ENCODE measurements at regions of chr14 and their contacts with region 1.

Region 1: DNA sequence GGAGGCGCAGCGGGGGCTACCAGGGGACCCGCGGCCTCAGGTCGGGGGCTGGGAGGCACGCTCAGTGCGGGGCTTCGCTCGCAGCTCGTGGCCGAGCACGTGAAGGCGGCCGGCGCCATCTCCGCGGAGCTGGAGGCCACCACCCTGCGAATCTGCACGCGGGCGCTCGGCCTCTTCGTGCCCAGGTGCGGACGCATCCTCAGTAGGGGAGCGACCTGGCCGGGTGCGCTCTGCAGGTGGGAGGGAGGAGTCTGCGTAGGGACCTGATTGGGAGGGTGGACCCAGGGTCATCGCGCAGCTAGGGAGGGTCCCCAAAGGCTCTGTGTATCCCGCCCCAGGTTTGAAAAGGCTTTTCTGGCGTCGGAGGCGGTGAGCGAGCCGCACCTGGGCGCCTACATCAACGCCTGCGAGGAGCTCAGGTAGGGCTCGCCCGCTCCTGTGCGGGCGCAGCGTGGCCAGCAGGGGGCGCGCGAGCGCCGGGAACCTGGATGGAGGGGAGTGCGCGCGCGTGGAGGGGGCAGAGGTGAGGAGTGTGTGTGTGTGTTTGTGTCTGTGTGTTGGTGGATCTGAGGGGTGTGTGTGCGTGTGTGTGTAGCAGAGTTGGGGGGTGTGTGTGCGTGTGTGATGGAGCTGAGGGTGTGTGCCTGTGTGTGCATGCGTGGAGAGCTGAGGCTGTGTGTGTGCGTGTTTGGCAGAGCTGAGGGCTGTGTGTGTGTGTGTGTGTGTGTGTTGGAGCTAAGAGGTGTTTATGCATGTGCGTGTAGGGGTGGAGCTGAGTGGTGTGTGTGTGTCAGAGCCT is 10.3 kb downstream of the EXOC3L4 start:
- DNase-seq: peak; percentile 59
- H3K4me3 Mint-ChIP-seq: no peak overlapping the region
- H3K27ac Mint-ChIP-seq: no peak overlapping the region
- H3K4me1 Mint-ChIP-seq: peaks cover 8% of the 10 kb centered on the region
- H3K27me3 Mint-ChIP-seq: peaks cover 13% of the 10 kb centered on the region
- CTCF ChIP-seq: peak; percentile 94

Region 2: GRCh38 chr14:103115883-103116572 is 11.2 kb after region 1 on chr14:
- CTCF ChIA-PET with region 1: interaction called, 17 read pairs
- POLR2A ChIA-PET with region 1: no interaction called
- intact Hi-C with region 1: no loop called
- DNase-seq: peak; percentile 68
- H3K4me3 Mint-ChIP-seq: no peak overlapping the region
- H3K27ac Mint-ChIP-seq: no peak overlapping the region
- H3K4me1 Mint-ChIP-seq: peaks cover 9% of the 10 kb centered on the region
- H3K27me3 Mint-ChIP-seq: no peaks in the 10 kb centered on the region
- CTCF ChIP-seq: no peak

Region 3: DNA sequence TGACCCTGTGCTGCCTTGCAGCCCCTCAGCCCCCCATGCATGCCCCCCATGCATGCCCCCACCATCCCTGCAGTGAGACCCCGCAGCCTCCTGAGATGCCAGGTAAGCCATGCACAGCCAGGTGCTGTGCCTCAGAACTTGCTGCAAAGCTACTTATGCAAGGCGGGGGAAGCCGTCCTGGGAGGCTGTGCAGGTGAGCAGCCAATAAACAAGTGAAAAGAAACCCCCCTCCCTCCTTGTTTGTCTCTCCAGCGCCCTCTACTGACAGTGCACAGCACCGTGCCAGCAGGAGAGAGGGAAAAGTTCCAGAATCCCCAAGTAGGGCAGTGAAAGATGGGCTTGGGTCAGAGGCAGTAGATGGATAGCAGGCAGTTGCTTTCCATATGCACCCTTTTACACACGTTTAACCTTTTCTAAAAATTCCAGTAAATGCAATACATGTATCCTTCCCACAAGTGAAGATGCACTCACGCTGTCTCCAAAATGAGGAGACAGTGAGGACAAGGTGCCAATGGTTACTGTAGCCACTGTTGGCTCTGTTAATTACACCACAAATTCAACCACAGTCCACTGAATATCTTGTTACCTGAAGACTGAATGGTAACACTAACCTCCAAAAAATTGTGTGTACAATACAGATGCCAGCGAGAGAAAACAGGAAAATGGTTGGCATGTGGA is 36.4 kb after region 1 on chr14:
- CTCF ChIA-PET with region 1: interaction called, 12 read pairs
- POLR2A ChIA-PET with region 1: no interaction called
- intact Hi-C with region 1: loop called (anchors 5 kb)
- DNase-seq: peak; percentile 77
- H3K4me3 Mint-ChIP-seq: no peak overlapping the region
- H3K27ac Mint-ChIP-seq: no peak overlapping the region
- H3K4me1 Mint-ChIP-seq: peaks cover 32% of the 10 kb centered on the region
- H3K27me3 Mint-ChIP-seq: peaks cover 19% of the 10 kb centered on the region
- CTCF ChIP-seq: peak; percentile 68

Region 4: GRCh38 chr14:103179094-103179493 is 74.2 kb after region 1 on chr14:
- CTCF ChIA-PET with region 1: interaction called, 27 read pairs
- POLR2A ChIA-PET with region 1: no interaction called
- intact Hi-C with region 1: no loop called
- DNase-seq: no peak
- H3K4me3 Mint-ChIP-seq: no peak overlapping the region
- H3K27ac Mint-ChIP-seq: no peak overlapping the region
- H3K4me1 Mint-ChIP-seq: no peaks in the 10 kb centered on the region
- H3K27me3 Mint-ChIP-seq: peaks cover 10% of the 10 kb centered on the region
- CTCF ChIP-seq: no peak

Region 5: GRCh38 chr14:103260620-103261124 is 155.8 kb after region 1 on chr14:
- CTCF ChIA-PET with region 1: interaction called, 14 read pairs
- POLR2A ChIA-PET with region 1: interaction called, 7 read pairs
- intact Hi-C with region 1: no loop called
- DNase-seq: peak; percentile 70
- H3K4me3 Mint-ChIP-seq: peak overlapping the region; percentile 74
- H3K27ac Mint-ChIP-seq: peak overlapping the region; percentile 94
- H3K4me1 Mint-ChIP-seq: peaks cover 19% of the 10 kb centered on the region
- H3K27me3 Mint-ChIP-seq: no peaks in the 10 kb centered on the region
- CTCF ChIP-seq: no peak

Region 6: GRCh38 chr14:103292426-103293374 is 187.8 kb after region 1 on chr14:
- CTCF ChIA-PET with region 1: interaction called, 166 read pairs
- POLR2A ChIA-PET with region 1: interaction called, 4 read pairs
- intact Hi-C with region 1: loop called (anchors 1 kb)
- DNase-seq: peak; percentile 73
- H3K4me3 Mint-ChIP-seq: no peak overlapping the region
- H3K27ac Mint-ChIP-seq: no peak overlapping the region
- H3K4me1 Mint-ChIP-seq: no peaks in the 10 kb centered on the region
- H3K27me3 Mint-ChIP-seq: no peaks in the 10 kb centered on the region
- CTCF ChIP-seq: peak; percentile 94

Region 7: GRCh38 chr14:103391048-103391447 is 286.2 kb after region 1 on chr14:
- CTCF ChIA-PET with region 1: interaction called, 10 read pairs
- POLR2A ChIA-PET with region 1: no interaction called
- intact Hi-C with region 1: no loop called
- DNase-seq: peak; percentile 68
- H3K4me3 Mint-ChIP-seq: no peak overlapping the region
- H3K27ac Mint-ChIP-seq: no peak overlapping the region
- H3K4me1 Mint-ChIP-seq: peaks cover 30% of the 10 kb centered on the region
- H3K27me3 Mint-ChIP-seq: no peaks in the 10 kb centered on the region
- CTCF ChIP-seq: peak; percentile 65